ENCODE measurements at regions of chr1 and their contacts with region 1.

Region 1: GRCh38 chr1:34162852-34163766 is 1.9 kb downstream of the CSMD2 start:
- DNase-seq: peak; percentile 71 to 91 (median 87)
- H3K4me3 ChIP-seq: peak overlapping the region; percentile 42 to 81 (median 69)
- H3K27ac ChIP-seq: peak overlapping the region in 35 of 59 donors; percentile 12 to 97 (median 71)
- H3K27me3 ChIP-seq: peaks cover 0 to 3% (median 0%) of the 10 kb centered on the region in 45 donors
- CTCF ChIP-seq: peak; percentile 45 to 94 (median 84)

Region 2: GRCh38 chr1:33876970-33877650 is 286.0 kb before region 1 on chr1:
- intact Hi-C with region 1: loop called in 1 of 2 experiments (anchors 5 kb)
- DNase-seq: peak in 9 of 10 donors; percentile 29 to 82 (median 65)
- H3K4me3 ChIP-seq: no peak overlapping the region
- H3K27ac ChIP-seq: no peak overlapping the region
- H3K27me3 ChIP-seq: no peaks in the 10 kb centered on the region
- CTCF ChIP-seq: no peak

Region 3: GRCh38 chr1:34060901-34061415 is 102.2 kb before region 1 on chr1:
- intact Hi-C with region 1: loop called (anchors 10 kb)
- DNase-seq: peak in 4 of 10 donors; percentile 7 to 43 (median 32)
- H3K4me3 ChIP-seq: peak overlapping the region in 2 of 59 donors; percentile 1 to 12
- H3K27ac ChIP-seq: peak overlapping the region in 54 of 59 donors; percentile 1 to 82 (median 70)
- H3K27me3 ChIP-seq: no peaks in the 10 kb centered on the region
- CTCF ChIP-seq: peak in 2 of 56 donors; percentile 13 to 14

Region 4: GRCh38 chr1:34113887-34114286 is 49.2 kb before region 1 on chr1:
- intact Hi-C with region 1: loop called in 1 of 2 experiments (anchors 2 kb)
- DNase-seq: no peak
- H3K4me3 ChIP-seq: no peak overlapping the region
- H3K27ac ChIP-seq: no peak overlapping the region
- H3K27me3 ChIP-seq: no peaks in the 10 kb centered on the region
- CTCF ChIP-seq: peak in 52 of 56 donors; percentile 23 to 64 (median 51)

Region 5: DNA sequence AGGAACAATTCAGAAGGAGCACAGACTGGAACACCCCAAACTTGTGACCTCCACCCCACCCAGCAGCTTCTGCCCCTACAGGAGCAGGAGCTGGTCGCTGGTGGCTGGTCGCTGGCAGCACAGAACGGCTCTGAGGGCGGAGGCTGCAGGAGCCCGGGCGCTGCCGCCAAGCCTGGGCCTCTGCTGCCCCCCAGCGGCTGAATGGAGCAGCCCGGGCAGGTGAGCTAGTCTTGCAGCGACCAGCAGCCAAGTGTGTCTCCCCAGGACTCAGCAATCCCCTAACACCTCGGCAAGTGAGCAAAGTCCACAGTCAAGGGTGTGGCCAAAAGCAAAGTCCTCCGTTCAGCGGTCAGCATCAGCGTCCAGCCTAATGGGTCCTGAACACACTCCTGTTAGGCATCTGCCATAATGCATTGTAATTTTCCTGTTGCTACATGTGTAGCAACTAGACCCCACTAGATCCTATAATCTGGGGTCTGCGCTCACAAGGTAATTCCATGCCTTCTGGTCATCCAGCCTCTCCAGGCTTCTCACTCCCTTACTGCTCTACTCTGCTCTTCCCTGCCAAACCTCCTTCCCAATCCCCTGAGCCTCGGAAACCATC is 579.7 kb after region 1 on chr1:
- intact Hi-C with region 1: loop called (anchors 5 to 10 kb)
- DNase-seq: peak; percentile 67 to 90 (median 79)
- H3K4me3 ChIP-seq: no peak overlapping the region
- H3K27ac ChIP-seq: peak overlapping the region in 1 of 59 donors; percentile 44
- H3K27me3 ChIP-seq: no peaks in the 10 kb centered on the region
- CTCF ChIP-seq: peak; percentile 39 to 97 (median 92)